Activated T-helper 1 cell treated with anti-CD3 and anti-CD28 coated beads, Interleukin-12 subunit alpha, Interleukin-12 subunit beta, Interleukin-2, Interleukin-4 antibody, amounts not matched to agents 30 ng/mL and 10 ng/mL and 1 ng/mL, durations not matched to agents 14 hours and 24 hours and 36 hours (primary cell): ENCODE measurements at regions of chr1 and their contacts with region 1.

Region 1: GRCh38 chr1:109620841-109621286 is 1.2 kb downstream of the AMPD2 start:
- DNase-seq: peak; percentile 96
- H3K4me3 Mint-ChIP-seq: peak overlapping the region; percentile 95
- H3K27ac Mint-ChIP-seq: peak overlapping the region; percentile 97
- H3K4me1 Mint-ChIP-seq: peaks cover 64% of the 10 kb centered on the region
- H3K27me3 Mint-ChIP-seq: peaks cover 2% of the 10 kb centered on the region

Region 2: GRCh38 chr1:109655601-109656519 is 35.0 kb after region 1 on chr1 and contains the start of gene GSTM4:
- intact Hi-C with region 1: loop called (anchors 1 kb)
- DNase-seq: peak; percentile 56
- H3K4me3 Mint-ChIP-seq: peak within 1 kb of the TSS; percentile 95
- H3K27ac Mint-ChIP-seq: peak within 1 kb of the TSS; percentile 92
- H3K4me1 Mint-ChIP-seq: peaks cover 15% of the 10 kb centered on the region
- H3K27me3 Mint-ChIP-seq: peaks cover 19% of the 10 kb centered on the region
- total RNA-seq, gene GSTM4: 6.5 and 8.9 TPM in 2 replicates

Region 3: GRCh38 chr1:109687616-109688499 is 67.0 kb after region 1 on chr1 and contains the start of gene GSTM1:
- intact Hi-C with region 1: loop called (anchors 2 kb)
- DNase-seq: peak; percentile 86
- H3K4me3 Mint-ChIP-seq: peak within 1 kb of the TSS; percentile 93
- H3K27ac Mint-ChIP-seq: peak within 1 kb of the TSS; percentile 98
- H3K4me1 Mint-ChIP-seq: peaks cover 20% of the 10 kb centered on the region
- H3K27me3 Mint-ChIP-seq: peaks cover 4% of the 10 kb centered on the region
- total RNA-seq, gene GSTM1: 77.4 and 86.4 TPM in 2 replicates

Region 4: DNA sequence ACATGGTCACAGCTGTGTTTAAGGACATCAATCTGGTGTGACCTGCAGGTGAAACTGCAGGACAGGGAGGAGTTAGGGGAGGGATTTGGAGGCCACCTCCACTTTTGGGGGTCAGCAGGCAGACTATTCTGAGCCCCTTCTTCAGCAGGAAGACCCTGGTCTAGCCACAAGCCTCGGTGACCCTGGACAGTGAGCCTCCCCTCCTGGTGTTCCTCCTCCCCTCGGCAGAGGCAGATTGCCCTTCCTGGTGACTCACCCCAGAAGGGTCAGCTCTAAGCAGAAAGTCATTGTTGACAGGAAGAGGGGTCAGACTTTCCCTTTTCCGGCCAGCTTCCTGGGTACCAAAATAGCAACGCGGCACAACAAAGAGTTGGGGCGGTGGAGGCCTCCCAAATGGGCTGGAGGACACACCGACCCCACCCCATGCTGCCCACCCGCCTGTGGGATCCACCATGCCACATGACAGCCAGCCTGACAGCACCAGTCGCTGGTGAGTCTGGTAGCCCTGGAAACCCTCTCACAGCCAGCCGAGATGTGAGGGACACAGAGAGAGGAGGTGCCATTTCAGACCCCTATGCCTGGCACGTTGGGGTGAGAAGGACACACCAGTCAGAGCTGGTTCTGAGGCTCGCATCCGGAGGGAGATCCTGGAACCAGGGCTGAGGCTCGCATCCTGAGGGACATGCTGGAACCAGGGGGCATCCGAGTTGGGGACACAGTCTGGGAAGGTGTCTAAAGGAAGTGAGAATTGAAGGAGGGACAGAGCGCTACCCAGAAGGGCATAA is 275.0 kb after region 1 on chr1:
- intact Hi-C with region 1: loop called (anchors 5 kb)
- DNase-seq: peak; percentile 30
- H3K4me3 Mint-ChIP-seq: no peak overlapping the region
- H3K27ac Mint-ChIP-seq: no peak overlapping the region
- H3K4me1 Mint-ChIP-seq: peaks cover 5% of the 10 kb centered on the region
- H3K27me3 Mint-ChIP-seq: no peaks in the 10 kb centered on the region

Region 5: DNA sequence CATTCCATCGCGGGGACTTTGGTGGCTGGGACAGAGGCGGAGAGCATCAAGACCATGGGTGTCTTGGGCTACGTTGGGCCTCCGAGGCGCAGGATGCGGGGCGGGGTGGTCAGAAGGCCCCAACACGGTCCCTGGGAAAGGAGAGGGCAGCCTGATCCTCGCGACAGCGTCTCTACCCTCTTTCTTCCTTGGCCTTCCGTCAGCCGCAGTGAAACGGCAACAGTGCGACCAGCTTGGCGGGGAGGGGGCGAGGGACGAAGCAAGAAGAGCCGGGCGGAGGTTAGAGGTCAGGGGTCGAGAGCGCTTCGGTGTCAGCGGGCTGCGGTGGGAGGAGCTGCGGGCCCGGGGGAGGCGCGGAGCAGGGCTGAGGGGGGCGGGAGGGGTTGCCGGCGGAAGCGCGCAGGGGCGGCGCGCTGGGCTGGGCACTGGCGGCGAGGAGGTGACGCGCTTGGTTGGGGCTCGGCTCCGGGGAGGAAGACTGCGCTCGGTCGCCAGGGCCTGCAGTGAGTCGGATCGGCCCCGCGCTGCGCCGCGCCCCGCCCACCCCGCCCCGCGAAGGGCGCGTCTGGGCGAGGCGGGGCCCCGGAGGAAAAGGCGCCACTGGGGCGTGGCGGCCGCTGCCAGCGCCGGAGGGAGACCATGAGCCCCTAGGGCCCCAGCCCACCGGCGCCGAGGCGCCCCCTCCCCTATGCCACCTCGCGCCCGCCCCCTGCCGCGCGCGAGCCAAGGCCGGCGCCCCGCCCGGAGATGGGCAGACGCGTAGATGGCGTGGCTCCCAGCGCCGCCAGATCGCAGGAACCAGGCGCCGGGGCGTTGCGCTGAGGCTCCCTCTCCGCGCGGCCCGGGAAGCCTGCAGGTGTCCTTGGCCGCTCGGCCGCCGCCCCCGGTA is 589.1 kb after region 1 on chr1 and contains the start of gene KCNC4:
- intact Hi-C with region 1: loop called (anchors 2 kb)
- DNase-seq: peak; percentile 88
- H3K4me3 Mint-ChIP-seq: peak within 1 kb of the TSS; percentile 88
- H3K27ac Mint-ChIP-seq: peak within 1 kb of the TSS; percentile 87
- H3K4me1 Mint-ChIP-seq: peaks cover 40% of the 10 kb centered on the region
- H3K27me3 Mint-ChIP-seq: peaks cover 13% of the 10 kb centered on the region
- total RNA-seq, gene KCNC4: 11.8 and 14.3 TPM in 2 replicates